ENCODE measurements at regions of chr16 and their contacts with region 1.

Region 1: DNA sequence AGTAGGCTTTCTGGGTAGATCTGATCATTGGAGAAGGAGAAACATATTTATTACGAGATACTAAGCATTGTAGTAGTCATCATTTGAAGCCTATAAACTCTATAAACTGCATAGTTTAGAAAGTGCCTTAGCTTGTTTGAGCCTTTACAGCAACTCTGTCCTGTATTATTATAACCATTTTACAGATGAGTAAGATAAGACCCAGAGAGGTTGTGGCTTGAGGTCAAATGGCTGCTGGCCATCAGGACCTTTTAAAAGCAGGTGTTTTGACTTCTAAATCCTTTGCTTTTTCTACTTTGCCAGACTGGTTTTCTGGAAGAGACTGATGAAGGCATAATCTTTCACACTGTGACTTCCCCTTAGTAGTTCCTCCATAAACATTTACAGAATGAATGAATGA is 7.1 kb downstream of the USP10 start:
- DNase-seq: no peak
- H3K4me3 ChIP-seq: no peak overlapping the region
- H3K27ac ChIP-seq: no peak overlapping the region
- H3K4me1 ChIP-seq: peaks cover 0 to 11% of the 10 kb centered on the region in 2 donors
- H3K27me3 ChIP-seq: no peaks in the 10 kb centered on the region
- CTCF ChIP-seq: no peak
- POLR2A ChIP-seq: no peak

Region 2: DNA sequence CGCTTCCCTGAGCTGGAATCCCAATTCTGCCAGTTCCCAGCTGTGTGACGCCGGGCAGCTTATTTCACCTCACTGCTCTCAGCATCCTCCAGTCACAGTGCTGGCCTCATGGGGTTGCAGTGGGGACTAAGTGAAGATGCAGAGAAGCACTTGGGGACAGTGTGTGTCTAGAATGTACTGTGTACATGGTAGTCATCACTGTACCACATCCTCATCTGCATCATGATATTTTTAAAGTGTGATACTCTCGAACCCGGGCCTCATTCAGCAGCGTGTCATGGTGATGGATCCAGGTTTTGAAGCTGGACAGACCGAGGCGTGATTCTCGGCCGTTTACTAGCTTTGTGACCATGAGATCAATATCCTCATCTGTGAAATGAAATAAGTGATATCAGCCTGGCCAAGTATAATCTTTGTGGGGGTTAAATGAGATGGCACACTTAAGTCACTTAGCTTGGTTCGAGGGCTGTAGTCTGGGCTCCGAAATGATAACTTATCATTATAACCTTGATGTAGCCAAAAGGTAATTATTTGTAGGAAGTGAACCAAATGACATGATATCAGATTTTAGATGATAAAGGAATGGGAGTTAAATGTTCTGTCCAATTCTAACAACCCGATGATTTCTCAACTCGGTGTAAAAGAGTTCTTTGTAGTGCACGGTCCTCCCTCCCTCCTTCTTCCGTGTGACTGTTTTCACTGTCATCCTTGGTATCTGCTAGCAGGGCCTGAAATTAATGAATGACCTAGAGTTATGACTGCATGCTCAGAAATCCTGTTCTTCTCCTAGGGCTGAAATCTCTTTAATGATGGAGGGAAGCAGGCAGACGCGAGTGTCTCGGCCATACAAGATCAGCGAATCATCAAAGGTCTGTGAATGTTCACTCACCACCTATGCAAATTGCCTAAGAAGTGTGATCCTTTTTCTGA is 56.5 kb before region 1 on chr16:
- intact Hi-C with region 1: no loop called
- DNase-seq: no peak
- H3K4me3 ChIP-seq: no peak overlapping the region
- H3K27ac ChIP-seq: peak overlapping the region; percentile 26 to 34
- H3K4me1 ChIP-seq: peaks cover 0 to 5% of the 10 kb centered on the region in 2 donors
- H3K27me3 ChIP-seq: no peaks in the 10 kb centered on the region
- CTCF ChIP-seq: no peak
- POLR2A ChIP-seq: no peak

Region 3: DNA sequence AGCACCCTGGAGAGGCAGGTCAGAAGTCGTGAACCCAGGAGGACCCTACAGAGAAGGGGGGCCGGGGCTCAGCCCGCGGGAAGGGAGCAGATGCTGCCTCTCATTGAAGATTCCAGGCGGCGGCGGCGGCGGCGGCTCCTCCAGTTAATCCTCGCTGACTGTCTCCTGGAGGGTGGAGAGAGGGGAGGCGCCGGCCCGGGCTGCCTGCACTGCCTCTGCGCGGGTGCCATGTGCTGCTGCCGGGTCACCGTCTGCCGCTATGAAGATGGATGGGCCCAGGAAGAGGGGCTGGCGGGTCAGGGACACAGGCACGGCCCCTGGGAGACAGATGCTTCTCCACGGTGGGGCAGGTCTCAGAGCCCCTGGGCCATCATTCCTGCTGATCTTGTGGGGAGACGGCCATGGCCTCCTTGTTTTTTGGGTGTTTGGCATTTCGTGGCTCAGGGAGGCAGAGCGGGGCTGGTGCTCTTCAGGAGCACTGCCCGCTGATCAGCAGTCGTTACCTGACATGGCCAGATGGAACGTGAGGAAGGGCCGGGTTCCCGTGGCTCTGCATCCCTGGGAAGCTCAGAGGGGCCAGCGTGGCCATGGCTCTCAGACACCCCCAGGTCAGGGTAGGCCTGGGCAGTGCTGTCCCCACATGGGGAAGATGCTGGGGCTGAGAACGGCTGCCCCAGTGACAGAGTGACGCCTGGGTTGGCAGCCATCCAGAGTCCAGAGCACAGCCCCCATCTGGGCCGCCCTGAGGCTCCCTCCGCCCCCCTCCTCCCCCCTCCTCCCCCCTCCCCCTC is 945.8 kb after region 1 on chr16:
- intact Hi-C with region 1: loop called (anchors 5 kb)
- DNase-seq: no peak
- H3K4me3 ChIP-seq: no peak overlapping the region
- H3K27ac ChIP-seq: peak overlapping the region; percentile 57 to 59
- H3K4me1 ChIP-seq: peaks cover 0 to 7% of the 10 kb centered on the region in 2 donors
- H3K27me3 ChIP-seq: no peaks in the 10 kb centered on the region
- CTCF ChIP-seq: no peak
- POLR2A ChIP-seq: no peak